Heart left ventricle (tissue), 16 donors: ENCODE measurements at regions of chr2 and their contacts with region 1.

Region 1: DNA sequence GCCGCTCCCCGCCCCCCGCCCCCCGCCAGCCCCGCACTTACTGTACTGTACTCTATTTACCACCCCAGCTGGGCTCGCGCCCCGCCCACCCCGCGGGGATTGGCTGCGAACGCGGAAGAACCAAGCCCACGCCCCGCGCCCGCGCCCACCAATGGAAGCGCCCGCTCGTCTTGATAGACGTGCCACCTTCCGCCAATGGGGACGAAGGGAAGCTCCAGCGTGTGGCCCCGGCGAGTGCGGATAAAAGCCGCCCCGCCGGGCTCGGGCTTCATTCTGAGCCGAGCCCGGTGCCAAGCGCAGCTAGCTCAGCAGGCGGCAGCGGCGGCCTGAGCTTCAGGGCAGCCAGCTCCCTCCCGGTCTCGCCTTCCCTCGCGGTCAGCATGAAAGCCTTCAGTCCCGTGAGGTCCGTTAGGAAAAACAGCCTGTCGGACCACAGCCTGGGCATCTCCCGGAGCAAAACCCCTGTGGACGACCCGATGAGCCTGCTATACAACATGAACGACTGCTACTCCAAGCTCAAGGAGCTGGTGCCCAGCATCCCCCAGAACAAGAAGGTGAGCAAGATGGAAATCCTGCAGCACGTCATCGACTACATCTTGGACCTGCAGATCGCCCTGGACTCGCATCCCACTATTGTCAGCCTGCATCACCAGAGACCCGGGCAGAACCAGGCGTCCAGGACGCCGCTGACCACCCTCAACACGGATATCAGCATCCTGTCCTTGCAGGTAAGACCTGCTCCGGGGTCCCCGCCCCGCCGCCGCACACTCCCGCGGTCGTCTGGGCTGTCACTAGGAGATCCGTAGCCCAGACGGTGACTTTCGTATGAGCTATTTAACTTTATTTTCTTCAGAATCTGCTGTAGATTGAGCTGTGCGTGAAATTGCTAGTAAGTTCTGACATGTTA is at the start of gene ID2:
- DNase-seq: peak; percentile 99 to 100 (median 100)
- ATAC-seq: peak; percentile 82 to 89 (median 87)
- H3K4me3 ChIP-seq: peak within 1 kb of the TSS; percentile 68 to 92 (median 84)
- H3K27ac ChIP-seq: peak within 1 kb of the TSS; percentile 88 to 100 (median 99)
- H3K4me1 ChIP-seq: peaks cover 0 to 50% (median 33%) of the 10 kb centered on the region in 12 donors
- H3K27me3 ChIP-seq: peaks cover 0 to 3% (median 0%) of the 10 kb centered on the region in 9 donors
- CTCF ChIP-seq: no peak
- POLR2A ChIP-seq: peak; percentile 93 to 100
- total RNA-seq, gene ID2: 17.3 to 121 (median 25.5) TPM

Region 2: GRCh38 chr2:7097348-7097895 is 1584.6 kb before region 1 on chr2:
- intact Hi-C with region 1: loop called in 4 of 10 experiments (anchors 5 to 10 kb)
- DNase-seq: peak; percentile 58 to 86 (median 68)
- ATAC-seq: peak; percentile 70 to 92 (median 90)
- H3K4me3 ChIP-seq: peak overlapping the region in 4 of 12 donors; percentile 8 to 38 (median 26)
- H3K27ac ChIP-seq: no peak overlapping the region
- H3K4me1 ChIP-seq: peaks cover 0 to 8% (median 1%) of the 10 kb centered on the region in 12 donors
- H3K27me3 ChIP-seq: no peaks in the 10 kb centered on the region
- CTCF ChIP-seq: peak; percentile 95 to 99 (median 98)
- POLR2A ChIP-seq: no peak

Region 3: GRCh38 chr2:7427293-7428060 is 1254.6 kb before region 1 on chr2:
- intact Hi-C with region 1: loop called (anchors 1 to 5 kb)
- DNase-seq: no peak
- ATAC-seq: peak in 3 of 4 donors; percentile 37 to 54 (median 44)
- H3K4me3 ChIP-seq: no peak overlapping the region
- H3K27ac ChIP-seq: no peak overlapping the region
- H3K4me1 ChIP-seq: peaks cover 0 to 36% (median 5%) of the 10 kb centered on the region in 12 donors
- H3K27me3 ChIP-seq: peaks cover 0 to 26% (median 9%) of the 10 kb centered on the region in 9 donors
- CTCF ChIP-seq: peak; percentile 64 to 83 (median 74)
- POLR2A ChIP-seq: no peak

Region 4: GRCh38 chr2:8132351-8132831 is 549.6 kb before region 1 on chr2:
- intact Hi-C with region 1: loop called in 3 of 10 experiments (anchors 5 to 10 kb)
- DNase-seq: peak; percentile 30 to 71 (median 41)
- ATAC-seq: peak in 3 of 4 donors; percentile 68 to 84 (median 79)
- H3K4me3 ChIP-seq: no peak overlapping the region
- H3K27ac ChIP-seq: peak overlapping the region in 10 of 12 donors; percentile 13 to 84 (median 55)
- H3K4me1 ChIP-seq: peaks cover 0 to 40% (median 18%) of the 10 kb centered on the region in 12 donors
- H3K27me3 ChIP-seq: no peaks in the 10 kb centered on the region
- CTCF ChIP-seq: no peak
- POLR2A ChIP-seq: no peak

Region 5: GRCh38 chr2:8234757-8235374 is 447.2 kb before region 1 on chr2:
- intact Hi-C with region 1: loop called in 3 of 10 experiments (anchors 5 to 10 kb)
- DNase-seq: no peak
- ATAC-seq: peak; percentile 26 to 47 (median 36)
- H3K4me3 ChIP-seq: no peak overlapping the region
- H3K27ac ChIP-seq: peak overlapping the region in 6 of 12 donors; percentile 23 to 60 (median 36)
- H3K4me1 ChIP-seq: peaks cover 0 to 47% (median 13%) of the 10 kb centered on the region in 12 donors
- H3K27me3 ChIP-seq: no peaks in the 10 kb centered on the region
- CTCF ChIP-seq: no peak
- POLR2A ChIP-seq: no peak

Region 6: GRCh38 chr2:8488001-8488738 is 193.9 kb before region 1 on chr2:
- intact Hi-C with region 1: loop called in 1 of 10 experiments (anchors 10 kb)
- DNase-seq: no peak
- ATAC-seq: peak in 2 of 4 donors; percentile 27 to 55
- H3K4me3 ChIP-seq: peak overlapping the region in 5 of 12 donors; percentile 8 to 41 (median 17)
- H3K27ac ChIP-seq: peak overlapping the region in 1 of 12 donors; percentile 78
- H3K4me1 ChIP-seq: peaks cover 0 to 53% (median 9%) of the 10 kb centered on the region in 12 donors
- H3K27me3 ChIP-seq: no peaks in the 10 kb centered on the region
- CTCF ChIP-seq: no peak
- POLR2A ChIP-seq: no peak

Region 7: DNA sequence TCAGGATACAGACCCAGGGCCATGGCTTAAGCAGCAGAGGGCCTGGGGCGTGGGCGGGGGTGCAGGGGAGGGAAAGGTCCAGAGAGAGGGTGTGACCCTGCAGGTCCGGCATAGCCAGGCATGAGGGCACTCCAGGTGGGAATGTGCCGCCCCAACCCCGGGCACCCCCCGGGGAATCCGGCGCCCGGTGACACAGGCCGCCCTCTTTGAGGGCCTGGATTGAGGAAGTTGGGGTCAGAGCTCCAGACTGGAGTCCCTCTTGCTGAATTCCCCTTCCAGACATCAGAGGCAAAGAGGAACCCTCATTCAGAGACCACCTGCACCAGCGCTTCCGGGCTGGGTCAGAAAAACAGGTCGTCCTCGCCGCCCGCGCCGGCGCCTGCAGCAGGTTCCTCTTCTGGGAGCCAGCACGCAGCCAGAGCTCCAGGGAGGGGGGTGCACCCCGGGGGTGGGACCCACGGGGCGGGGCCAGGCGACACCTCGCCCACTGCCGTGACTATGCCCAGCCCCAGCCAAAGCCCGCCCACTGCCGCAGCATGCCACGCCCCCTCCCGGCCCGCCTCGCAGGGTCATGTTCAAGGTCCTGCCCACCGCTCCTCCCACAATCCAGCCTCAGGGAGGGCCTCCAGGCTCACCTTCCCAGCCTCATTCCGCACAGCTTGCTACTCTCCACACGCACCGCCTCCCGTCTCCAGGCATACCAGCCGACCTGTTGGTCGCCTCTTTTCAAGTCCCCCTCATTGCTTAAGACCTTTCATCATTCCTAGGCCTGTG is 98.5 kb before region 1 on chr2:
- intact Hi-C with region 1: loop called in 3 of 10 experiments (anchors 5 kb)
- DNase-seq: peak; percentile 90 to 97 (median 94)
- ATAC-seq: peak; percentile 96 to 98 (median 98)
- H3K4me3 ChIP-seq: peak overlapping the region in 8 of 12 donors; percentile 2 to 31 (median 17)
- H3K27ac ChIP-seq: peak overlapping the region in 11 of 12 donors; percentile 6 to 75 (median 65)
- H3K4me1 ChIP-seq: peaks cover 0 to 34% (median 8%) of the 10 kb centered on the region in 12 donors
- H3K27me3 ChIP-seq: no peaks in the 10 kb centered on the region
- CTCF ChIP-seq: no peak
- POLR2A ChIP-seq: no peak